ENCODE measurements at regions of chr9 and their contacts with region 1.

Region 1: DNA sequence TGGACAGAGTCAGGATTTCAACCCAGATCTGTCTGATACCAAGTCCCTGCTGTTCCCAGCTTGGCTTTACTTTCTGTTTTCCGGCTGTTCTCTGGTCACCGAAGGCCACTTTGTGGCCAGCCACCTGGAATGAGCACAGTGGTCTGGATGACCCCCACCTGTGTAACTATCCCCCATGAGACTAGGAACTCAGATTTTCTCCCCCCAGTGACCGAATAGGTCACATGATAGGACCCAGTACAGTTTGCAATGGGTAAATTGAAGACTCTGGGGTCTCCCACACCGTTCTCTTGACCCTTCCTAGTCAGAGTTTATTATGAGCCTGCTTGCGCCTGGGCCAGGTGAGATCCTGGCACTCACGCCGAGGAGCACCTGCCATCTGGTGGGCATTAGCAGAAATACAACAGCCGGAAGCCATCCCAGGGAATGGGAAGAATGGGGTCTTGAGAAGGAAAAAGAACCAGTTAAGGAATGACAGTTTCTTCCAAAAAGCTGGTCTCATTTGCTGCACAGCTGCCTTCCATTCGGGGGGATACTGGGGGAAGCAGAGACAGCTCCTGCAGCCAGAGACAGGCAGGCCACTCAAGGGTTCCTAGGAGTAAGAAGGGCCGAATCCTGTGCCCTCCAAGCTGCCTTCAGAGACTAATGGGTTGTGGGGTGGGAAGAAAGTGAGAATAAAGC is 7.1 kb downstream of the PHYHD1 start:
- DNase-seq: peak; percentile 62
- ATAC-seq: peak; percentile 70
- H3K4me3 Mint-ChIP-seq: no peak overlapping the region
- H3K27ac Mint-ChIP-seq: peak overlapping the region; percentile 47
- H3K4me1 Mint-ChIP-seq: peaks cover 18% of the 10 kb centered on the region
- H3K27me3 Mint-ChIP-seq: no peaks in the 10 kb centered on the region

Region 2: DNA sequence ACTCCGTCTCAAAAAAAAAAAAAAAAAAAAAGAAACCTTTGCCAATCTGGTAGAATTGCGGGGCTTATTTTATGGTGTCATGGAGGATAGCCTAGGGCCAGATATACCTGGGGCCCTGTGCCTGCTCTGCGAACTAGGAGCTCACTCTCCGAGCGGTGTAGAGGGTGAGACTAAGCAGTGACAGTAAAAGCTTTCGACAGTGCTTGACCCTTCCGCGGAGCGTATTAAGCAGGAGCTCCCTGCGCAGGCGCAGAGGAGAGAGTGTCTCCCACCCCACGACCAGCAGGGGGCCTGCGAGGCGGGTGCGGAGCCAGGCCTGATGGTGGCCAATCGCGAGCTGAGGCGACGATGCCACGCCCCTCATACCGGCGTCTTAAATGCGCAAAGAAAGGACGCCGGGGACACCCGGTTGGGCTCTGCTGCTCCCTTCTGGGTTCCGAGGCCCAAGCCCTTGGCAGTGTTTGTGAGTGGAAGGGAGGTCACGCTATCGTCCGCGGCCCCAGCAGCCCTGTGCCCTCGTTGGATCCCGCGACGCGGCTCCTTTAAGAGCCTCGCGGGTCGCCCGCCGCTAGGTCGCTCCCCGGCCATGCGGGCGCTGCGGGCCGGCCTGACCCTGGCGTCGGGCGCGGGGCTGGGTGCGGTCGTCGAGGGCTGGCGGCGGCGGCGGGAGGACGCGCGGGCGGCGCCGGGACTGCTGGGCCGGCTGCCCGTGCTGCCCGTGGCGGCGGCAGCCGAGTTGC is 109.6 kb before region 1 on chr9 and contains the start of gene ENDOG:
- CTCF ChIA-PET with region 1: interaction called, 24 read pairs
- POLR2A ChIA-PET with region 1: interaction called, 3 read pairs
- DNase-seq: peak; percentile 98
- ATAC-seq: peak; percentile 94
- H3K4me3 Mint-ChIP-seq: peak within 1 kb of the TSS; percentile 83
- H3K27ac Mint-ChIP-seq: peak within 1 kb of the TSS; percentile 94
- H3K4me1 Mint-ChIP-seq: peaks cover 21% of the 10 kb centered on the region
- H3K27me3 Mint-ChIP-seq: no peaks in the 10 kb centered on the region
- total RNA-seq, gene ENDOG: 23.9 to 24.7 TPM

Region 3: DNA sequence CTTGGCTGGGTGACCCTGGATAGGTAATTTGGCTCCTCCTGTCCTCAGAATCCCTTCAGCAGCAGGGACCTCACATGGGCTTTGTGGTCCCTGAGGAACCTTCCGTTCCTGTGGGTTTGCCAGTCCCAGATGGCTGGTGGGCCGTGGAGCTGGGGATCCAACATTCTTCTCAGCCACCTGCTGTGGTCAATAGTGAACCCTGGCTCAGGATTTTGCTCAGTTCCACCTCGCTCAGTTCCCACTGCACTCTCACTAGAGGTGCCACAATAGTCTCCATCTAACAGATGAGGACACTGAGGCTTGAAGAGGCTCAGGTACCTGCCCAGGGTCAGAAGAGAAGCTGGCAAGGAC is 81.2 kb before region 1 on chr9:
- CTCF ChIA-PET with region 1: interaction called, 32 read pairs
- POLR2A ChIA-PET with region 1: interaction called, 3 read pairs
- DNase-seq: no peak
- ATAC-seq: no peak
- H3K4me3 Mint-ChIP-seq: no peak overlapping the region
- H3K27ac Mint-ChIP-seq: no peak overlapping the region
- H3K4me1 Mint-ChIP-seq: peaks cover 3% of the 10 kb centered on the region
- H3K27me3 Mint-ChIP-seq: no peaks in the 10 kb centered on the region

Region 4: GRCh38 chr9:128863647-128864046 is 64.2 kb before region 1 on chr9:
- CTCF ChIA-PET with region 1: interaction called, 160 read pairs
- POLR2A ChIA-PET with region 1: interaction called, 3 read pairs
- DNase-seq: peak; percentile 91
- ATAC-seq: peak; percentile 98
- H3K4me3 Mint-ChIP-seq: no peak overlapping the region
- H3K27ac Mint-ChIP-seq: no peak overlapping the region
- H3K4me1 Mint-ChIP-seq: peaks cover 11% of the 10 kb centered on the region
- H3K27me3 Mint-ChIP-seq: no peaks in the 10 kb centered on the region

Region 5: DNA sequence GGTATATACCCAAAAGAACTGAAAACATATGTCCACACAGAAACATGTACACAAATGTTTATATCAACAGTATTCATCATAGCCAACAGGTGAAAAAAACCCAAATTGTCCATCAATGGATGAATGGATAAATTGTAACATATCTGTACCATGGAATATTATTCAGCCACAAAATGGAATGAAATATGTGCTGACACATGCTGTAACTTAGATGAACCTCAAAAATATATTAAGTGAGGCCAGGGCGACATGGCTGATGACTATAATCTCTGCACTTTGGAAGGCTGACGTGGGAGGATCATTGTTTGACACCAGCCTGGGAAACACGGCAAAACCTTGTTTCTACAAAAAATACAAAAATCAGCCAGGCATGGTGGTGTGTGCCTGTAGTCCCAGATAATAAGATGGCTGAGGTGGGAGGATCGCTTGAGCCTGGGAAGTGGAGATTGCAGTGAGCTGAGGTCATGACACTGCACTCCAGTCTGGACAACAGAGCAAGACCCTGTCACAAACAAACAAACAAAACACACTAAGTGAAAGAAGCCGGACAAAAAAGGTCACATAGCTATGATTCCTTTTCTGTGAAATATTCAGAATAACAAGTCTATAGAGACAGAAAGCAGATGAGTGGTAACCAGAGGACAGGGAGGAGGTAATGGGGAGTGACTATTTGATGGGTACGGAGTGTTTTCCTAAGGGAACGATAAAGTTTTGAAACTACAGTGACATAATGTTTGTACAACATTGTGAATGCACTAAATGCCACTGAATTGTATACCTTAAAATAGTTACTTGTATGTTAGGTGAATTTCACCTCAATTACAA is 57.5 kb before region 1 on chr9:
- CTCF ChIA-PET with region 1: interaction called, 160 read pairs
- POLR2A ChIA-PET with region 1: no interaction called
- DNase-seq: no peak
- ATAC-seq: no peak
- H3K4me3 Mint-ChIP-seq: no peak overlapping the region
- H3K27ac Mint-ChIP-seq: no peak overlapping the region
- H3K4me1 Mint-ChIP-seq: peaks cover 6% of the 10 kb centered on the region
- H3K27me3 Mint-ChIP-seq: no peaks in the 10 kb centered on the region

Region 6: GRCh38 chr9:128881901-128882681 is 45.8 kb before region 1 on chr9 and contains the starts of genes KYAT1 and LRRC8A:
- CTCF ChIA-PET with region 1: interaction called, 23 read pairs
- POLR2A ChIA-PET with region 1: interaction called, 3 read pairs
- DNase-seq: peak; percentile 99
- ATAC-seq: peak; percentile 96
- H3K4me3 Mint-ChIP-seq: peak within 1 kb of the TSS; percentile 96
- H3K27ac Mint-ChIP-seq: peak within 1 kb of the TSS; percentile 91
- H3K4me1 Mint-ChIP-seq: peaks cover 53% of the 10 kb centered on the region
- H3K27me3 Mint-ChIP-seq: no peaks in the 10 kb centered on the region
- total RNA-seq, gene KYAT1: 12.6 to 13.0 TPM
- total RNA-seq, gene LRRC8A: 26.1 to 27.2 TPM

Region 7: GRCh38 chr9:128902351-128903078 is 25.4 kb before region 1 on chr9:
- CTCF ChIA-PET with region 1: interaction called, 19 read pairs
- POLR2A ChIA-PET with region 1: interaction called, 3 read pairs
- DNase-seq: peak; percentile 95
- ATAC-seq: peak; percentile 89
- H3K4me3 Mint-ChIP-seq: peak overlapping the region; percentile 77
- H3K27ac Mint-ChIP-seq: peak overlapping the region; percentile 93
- H3K4me1 Mint-ChIP-seq: peaks cover 69% of the 10 kb centered on the region
- H3K27me3 Mint-ChIP-seq: no peaks in the 10 kb centered on the region